HAP-1 (cell line): ENCODE measurements at regions of chr1 and their contacts with region 1.

Region 1: DNA sequence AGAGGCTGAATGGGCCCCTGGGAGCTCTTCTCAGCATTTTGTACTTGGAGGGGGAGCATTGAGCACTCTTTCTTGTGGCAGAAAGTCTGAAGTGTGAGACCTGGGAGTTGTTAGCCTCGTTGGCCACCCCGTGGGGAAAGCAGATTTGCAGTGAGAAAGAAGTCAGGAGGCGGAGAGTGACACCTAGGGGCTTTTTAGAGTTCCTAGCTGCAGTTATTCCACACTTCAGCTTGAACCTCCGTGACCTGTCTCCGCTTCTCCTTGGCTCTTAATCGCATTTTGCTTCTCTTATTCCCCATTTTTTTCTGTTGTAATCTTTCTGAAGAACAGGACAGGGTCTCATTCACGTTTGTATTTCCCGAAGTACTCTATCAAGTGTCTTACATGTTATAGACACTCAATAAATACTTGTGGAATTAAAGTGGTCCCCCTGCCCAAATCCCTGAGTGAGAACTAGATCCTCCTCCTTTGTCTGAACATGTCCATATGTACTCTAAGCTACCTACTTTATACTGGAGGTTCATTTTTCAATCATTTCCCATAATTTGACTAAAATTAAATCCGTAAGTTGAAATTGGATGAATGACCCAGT is 14.5 kb upstream of the C1orf141 start:
- DNase-seq: peak; percentile 57 to 71
- H3K4me3 ChIP-seq: no peak overlapping the region
- H3K4me1 ChIP-seq: no peaks in the 10 kb centered on the region
- H3K27me3 ChIP-seq: no peaks in the 10 kb centered on the region; the same call in 1 of the 2 replicates

Region 2: DNA sequence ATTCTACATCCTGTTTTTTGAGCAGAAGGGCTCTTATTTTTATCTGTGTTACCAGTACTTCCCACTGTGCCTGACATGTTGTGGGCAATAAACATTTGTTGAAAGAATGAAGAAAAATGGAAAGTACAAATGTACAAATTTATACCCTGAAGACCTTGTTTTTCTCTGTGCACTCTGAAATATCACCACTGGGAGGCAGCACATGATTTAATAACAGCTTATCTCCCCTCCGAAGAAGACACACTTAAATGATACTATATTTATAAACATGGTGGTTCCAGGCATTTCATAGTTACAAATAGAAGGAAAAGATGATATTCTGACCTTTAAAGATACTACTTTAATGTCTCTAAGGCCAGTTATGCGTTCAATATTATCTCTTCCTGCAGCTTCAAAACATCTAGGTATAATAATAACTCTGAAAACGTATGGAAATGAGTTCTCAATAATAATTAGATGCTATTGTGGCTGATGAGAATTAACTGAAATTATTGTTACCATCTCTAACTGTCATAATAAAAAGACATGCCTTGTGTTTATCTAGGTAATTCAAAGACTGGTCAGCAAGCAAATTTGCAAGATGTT is 384.2 kb before region 1 on chr1:
- in situ Hi-C with region 1: loop called (anchors 10 kb)
- DNase-seq: peak; percentile 51 to 67
- H3K4me3 ChIP-seq: no peak overlapping the region
- H3K4me1 ChIP-seq: no peaks in the 10 kb centered on the region
- H3K27me3 ChIP-seq: no peaks in the 10 kb centered on the region

Region 3: DNA sequence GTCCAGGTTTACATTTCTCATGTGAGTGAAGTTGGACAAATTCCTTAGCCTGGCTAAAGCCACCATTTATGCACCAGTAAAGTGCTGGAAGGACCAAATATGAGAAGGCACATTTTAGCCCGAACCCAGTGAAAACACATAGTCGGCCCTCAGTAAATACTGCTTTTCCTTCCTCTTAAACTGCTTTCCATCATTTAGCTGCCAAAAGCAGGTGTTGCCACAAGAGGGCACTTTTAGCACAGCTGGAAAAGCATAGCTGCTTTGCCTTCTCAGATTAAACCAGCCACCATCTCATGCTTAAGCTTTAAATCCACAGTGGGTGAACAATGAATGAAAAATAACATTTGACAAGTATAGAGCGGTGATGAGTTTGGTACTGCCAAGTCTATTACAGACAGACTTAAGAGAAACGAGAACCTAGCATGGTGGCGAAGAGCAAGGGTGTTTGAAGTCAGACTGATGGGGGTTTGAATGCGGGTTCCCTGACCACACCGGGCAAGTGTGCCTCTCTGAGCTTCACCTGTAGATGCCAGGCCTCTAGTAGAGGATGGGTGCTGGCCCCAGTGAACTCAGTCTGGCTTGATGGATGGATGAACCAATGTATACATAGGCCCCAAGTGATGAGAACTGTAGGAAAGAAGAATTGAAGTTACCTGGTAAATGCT is 153.1 kb before region 1 on chr1:
- in situ Hi-C with region 1: loop called (anchors 10 kb)
- DNase-seq: peak; percentile 59 to 66
- H3K4me3 ChIP-seq: no peak overlapping the region
- H3K4me1 ChIP-seq: no peaks in the 10 kb centered on the region
- H3K27me3 ChIP-seq: no peaks in the 10 kb centered on the region

Region 4: DNA sequence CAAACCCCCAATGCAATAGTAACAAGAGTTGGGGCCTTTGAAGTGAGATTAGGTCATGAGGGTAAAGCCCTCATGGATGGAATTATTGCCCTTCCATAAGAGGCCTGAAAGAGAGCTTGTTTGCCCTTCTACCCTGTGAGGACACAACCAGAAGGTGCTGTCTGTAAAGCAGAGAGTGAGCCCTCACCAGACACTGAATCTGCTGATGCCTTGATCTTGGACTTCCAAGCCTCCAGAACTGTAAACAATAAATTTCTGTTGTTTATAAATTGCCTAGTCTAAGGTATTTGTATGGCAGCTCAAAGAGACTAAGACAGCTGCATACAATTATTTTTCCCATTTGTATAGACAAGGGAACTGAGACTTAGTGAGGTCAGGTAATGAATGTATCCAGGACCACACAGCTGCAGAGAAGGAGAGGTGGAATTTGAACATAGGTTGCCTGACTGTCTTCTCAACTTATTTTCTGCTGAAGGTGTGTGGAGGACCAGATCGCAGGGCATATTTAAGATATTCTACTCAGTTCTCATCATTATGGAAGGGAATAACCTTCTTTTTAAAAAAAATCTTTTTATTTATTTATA is 35.7 kb after region 1 on chr1:
- in situ Hi-C with region 1: no loop called
- DNase-seq: no peak
- H3K4me3 ChIP-seq: no peak overlapping the region
- H3K4me1 ChIP-seq: no peaks in the 10 kb centered on the region
- H3K27me3 ChIP-seq: no peaks in the 10 kb centered on the region

Region 5: DNA sequence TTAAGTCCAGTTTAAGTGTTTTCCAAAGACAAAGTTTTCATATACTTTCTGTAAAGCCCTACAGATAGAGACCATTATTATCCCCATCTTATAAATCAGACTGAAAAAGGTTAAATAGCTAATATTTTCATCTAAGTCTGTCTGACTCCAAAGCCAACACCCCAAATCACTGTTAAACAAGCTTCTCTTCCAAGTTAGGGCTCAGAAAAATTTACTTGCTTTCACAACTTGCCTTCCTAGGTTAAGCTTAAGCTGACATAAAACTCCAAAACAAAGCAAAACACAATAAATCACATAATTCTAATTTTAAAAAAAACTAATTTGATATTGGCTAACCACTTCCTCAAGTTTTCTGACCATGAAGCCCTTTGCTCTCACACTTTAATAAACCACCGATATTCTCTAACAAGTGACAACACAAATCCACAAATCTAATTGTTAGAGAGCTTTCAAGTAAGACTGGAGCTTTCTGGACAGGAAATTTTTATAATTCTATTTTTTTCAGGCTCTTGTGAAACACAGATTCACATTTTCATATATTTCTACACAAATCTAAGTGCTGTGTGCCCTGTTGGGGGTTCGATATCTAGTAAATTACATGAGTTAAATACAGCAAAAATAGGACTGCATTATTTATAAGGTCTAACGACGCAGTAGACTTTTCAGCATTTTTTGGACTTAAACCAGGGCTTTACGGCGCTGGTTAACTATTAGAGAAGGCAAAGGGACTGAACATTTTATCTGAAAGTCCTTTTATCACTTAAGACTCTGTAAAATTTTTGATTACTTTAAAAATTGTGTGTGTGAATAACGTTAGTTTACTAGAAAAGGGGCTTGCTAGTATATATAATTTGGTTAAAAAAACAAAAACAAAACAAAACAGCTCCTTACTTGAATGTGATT is 681.9 kb after region 1 on chr1:
- in situ Hi-C with region 1: no loop called
- DNase-seq: no peak
- H3K4me3 ChIP-seq: peak overlapping the region; percentile 58
- H3K4me1 ChIP-seq: peaks cover 34% of the 10 kb centered on the region
- H3K27me3 ChIP-seq: no peaks in the 10 kb centered on the region